ENCODE measurements at regions of chr12 and their contacts with region 1.

Region 1: GRCh38 chr12:57904848-57905811 is 36.2 kb upstream of the ATP23 start:
- DNase-seq: peak; percentile 88 to 92
- ATAC-seq: peak; percentile 96
- H3K4me3 ChIP-seq: no peak overlapping the region
- H3K27ac ChIP-seq: no peak overlapping the region
- H3K4me1 ChIP-seq: no peaks in the 10 kb centered on the region
- H3K27me3 ChIP-seq: no peaks in the 10 kb centered on the region

Region 2: GRCh38 chr12:57782608-57783465 is 122.3 kb before region 1 on chr12 and contains the start of gene TSFM:
- intact Hi-C with region 1: loop called in 1 of 2 experiments (anchors 5 kb)
- DNase-seq: peak; percentile 98 to 100
- ATAC-seq: peak; percentile 98
- H3K4me3 ChIP-seq: peak within 1 kb of the TSS; percentile 16 to 95
- H3K27ac ChIP-seq: peak within 1 kb of the TSS in 1 of 2 donors; percentile 0
- H3K4me1 ChIP-seq: no peaks in the 10 kb centered on the region
- H3K27me3 ChIP-seq: no peaks in the 10 kb centered on the region
- total RNA-seq, gene TSFM: 15.0 to 17.2 TPM

Region 3: GRCh38 chr12:57803319-57803893 is 101.7 kb before region 1 on chr12:
- intact Hi-C with region 1: loop called (anchors 1 to 2 kb)
- DNase-seq: peak; percentile 65 to 87
- ATAC-seq: peak; percentile 82
- H3K4me3 ChIP-seq: no peak overlapping the region
- H3K27ac ChIP-seq: no peak overlapping the region
- H3K4me1 ChIP-seq: no peaks in the 10 kb centered on the region
- H3K27me3 ChIP-seq: no peaks in the 10 kb centered on the region

Region 4: DNA sequence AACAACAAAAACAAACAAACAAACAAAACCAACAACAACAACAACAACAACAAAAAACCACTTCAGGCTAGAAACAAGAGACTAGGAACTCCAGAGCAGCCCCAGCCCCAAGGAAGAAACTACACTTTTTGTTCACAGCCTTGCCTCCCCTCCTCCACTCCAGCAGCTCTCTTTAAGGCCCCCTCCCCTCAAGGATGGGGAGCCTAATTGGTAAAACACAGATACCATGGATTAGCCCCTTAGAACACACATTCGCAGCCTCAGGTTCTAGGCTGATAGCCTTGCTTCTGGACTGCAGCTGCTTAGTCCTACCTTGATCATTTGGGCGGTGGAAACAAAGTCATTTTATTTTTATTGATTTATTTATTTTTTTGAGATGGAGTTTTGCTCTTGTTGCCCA is 74.7 kb before region 1 on chr12:
- intact Hi-C with region 1: loop called (anchors 2 kb)
- DNase-seq: no peak
- ATAC-seq: no peak
- H3K4me3 ChIP-seq: no peak overlapping the region
- H3K27ac ChIP-seq: peak overlapping the region in 1 of 2 donors; percentile 22
- H3K4me1 ChIP-seq: peaks cover 0 to 17% of the 10 kb centered on the region in 2 donors
- H3K27me3 ChIP-seq: no peaks in the 10 kb centered on the region

Region 5: GRCh38 chr12:58046271-58046670 is 141.1 kb after region 1 on chr12:
- intact Hi-C with region 1: no loop called
- DNase-seq: no peak
- ATAC-seq: no peak
- H3K4me3 ChIP-seq: no peak overlapping the region
- H3K27ac ChIP-seq: no peak overlapping the region
- H3K4me1 ChIP-seq: no peaks in the 10 kb centered on the region
- H3K27me3 ChIP-seq: peaks cover 0 to 2% of the 10 kb centered on the region in 2 donors